CD8-positive, alpha-beta T cell (primary cell): ENCODE measurements at regions of chr2 and their contacts with region 1.

Region 1: GRCh38 chr2:33475224-33476130 is 972 bp upstream of the RASGRP3 start:
- DNase-seq: peak; percentile 68 to 93 (median 82)
- ATAC-seq: peak; percentile 78
- H3K4me3 ChIP-seq: peak overlapping the region; percentile 70
- H3K4me3 Mint-ChIP-seq: peak overlapping the region; percentile 98
- H3K27ac ChIP-seq: peak overlapping the region; percentile 88 to 91
- H3K27ac Mint-ChIP-seq: peak overlapping the region; percentile 98
- H3K4me1 ChIP-seq: peaks cover 21% of the 10 kb centered on the region
- H3K4me1 Mint-ChIP-seq: peaks cover 25% of the 10 kb centered on the region
- H3K27me3 ChIP-seq: no peaks in the 10 kb centered on the region
- H3K27me3 Mint-ChIP-seq: no peaks in the 10 kb centered on the region
- CTCF ChIP-seq: peak; percentile 75

Region 2: GRCh38 chr2:32277674-32278482 is 1197.6 kb before region 1 on chr2 and contains the start of gene YIPF4:
- CTCF ChIA-PET with region 1: no interaction called
- POLR2A ChIA-PET with region 1: no interaction called
- intact Hi-C with region 1: loop called (anchors 10 kb)
- DNase-seq: peak; percentile 83 to 95 (median 90)
- ATAC-seq: peak; percentile 97
- H3K4me3 ChIP-seq: peak within 1 kb of the TSS; percentile 96 to 97
- H3K4me3 Mint-ChIP-seq: peak within 1 kb of the TSS; percentile 85
- H3K27ac ChIP-seq: peak within 1 kb of the TSS; percentile 58 to 93
- H3K27ac Mint-ChIP-seq: peak within 1 kb of the TSS; percentile 95
- H3K4me1 ChIP-seq: peaks cover 34% of the 10 kb centered on the region
- H3K4me1 Mint-ChIP-seq: peaks cover 36% of the 10 kb centered on the region
- H3K27me3 ChIP-seq: no peaks in the 10 kb centered on the region
- H3K27me3 Mint-ChIP-seq: no peaks in the 10 kb centered on the region
- CTCF ChIP-seq: no peak
- total RNA-seq, gene YIPF4: 10.4 to 10.9 TPM

Region 3: GRCh38 chr2:32627814-32628579 is 847.5 kb before region 1 on chr2 and contains the start of gene TTC27:
- CTCF ChIA-PET with region 1: no interaction called
- POLR2A ChIA-PET with region 1: no interaction called
- intact Hi-C with region 1: loop called (anchors 5 to 10 kb)
- DNase-seq: peak; percentile 87 to 96 (median 95)
- ATAC-seq: peak; percentile 99
- H3K4me3 ChIP-seq: peak within 1 kb of the TSS; percentile 82 to 89
- H3K4me3 Mint-ChIP-seq: peak within 1 kb of the TSS; percentile 93
- H3K27ac ChIP-seq: peak within 1 kb of the TSS; percentile 73
- H3K27ac Mint-ChIP-seq: peak within 1 kb of the TSS; percentile 90
- H3K4me1 ChIP-seq: no peaks in the 10 kb centered on the region
- H3K4me1 Mint-ChIP-seq: peaks cover 35% of the 10 kb centered on the region
- H3K27me3 ChIP-seq: no peaks in the 10 kb centered on the region
- H3K27me3 Mint-ChIP-seq: no peaks in the 10 kb centered on the region
- CTCF ChIP-seq: no peak
- total RNA-seq, gene TTC27: 9.6 to 12.1 TPM

Region 4: GRCh38 chr2:33583194-33583938 is 107.9 kb after region 1 on chr2:
- CTCF ChIA-PET with region 1: interaction called, 10 read pairs
- POLR2A ChIA-PET with region 1: no interaction called
- intact Hi-C with region 1: loop called (anchors 1 to 5 kb)
- DNase-seq: peak in 6 of 9 experiments; percentile 16 to 65 (median 22)
- ATAC-seq: no peak
- H3K4me3 ChIP-seq: no peak overlapping the region
- H3K4me3 Mint-ChIP-seq: no peak overlapping the region
- H3K27ac ChIP-seq: no peak overlapping the region
- H3K27ac Mint-ChIP-seq: no peak overlapping the region
- H3K4me1 ChIP-seq: no peaks in the 10 kb centered on the region
- H3K4me1 Mint-ChIP-seq: peaks cover 4% of the 10 kb centered on the region
- H3K27me3 ChIP-seq: no peaks in the 10 kb centered on the region
- H3K27me3 Mint-ChIP-seq: no peaks in the 10 kb centered on the region
- CTCF ChIP-seq: peak; percentile 96

Region 5: DNA sequence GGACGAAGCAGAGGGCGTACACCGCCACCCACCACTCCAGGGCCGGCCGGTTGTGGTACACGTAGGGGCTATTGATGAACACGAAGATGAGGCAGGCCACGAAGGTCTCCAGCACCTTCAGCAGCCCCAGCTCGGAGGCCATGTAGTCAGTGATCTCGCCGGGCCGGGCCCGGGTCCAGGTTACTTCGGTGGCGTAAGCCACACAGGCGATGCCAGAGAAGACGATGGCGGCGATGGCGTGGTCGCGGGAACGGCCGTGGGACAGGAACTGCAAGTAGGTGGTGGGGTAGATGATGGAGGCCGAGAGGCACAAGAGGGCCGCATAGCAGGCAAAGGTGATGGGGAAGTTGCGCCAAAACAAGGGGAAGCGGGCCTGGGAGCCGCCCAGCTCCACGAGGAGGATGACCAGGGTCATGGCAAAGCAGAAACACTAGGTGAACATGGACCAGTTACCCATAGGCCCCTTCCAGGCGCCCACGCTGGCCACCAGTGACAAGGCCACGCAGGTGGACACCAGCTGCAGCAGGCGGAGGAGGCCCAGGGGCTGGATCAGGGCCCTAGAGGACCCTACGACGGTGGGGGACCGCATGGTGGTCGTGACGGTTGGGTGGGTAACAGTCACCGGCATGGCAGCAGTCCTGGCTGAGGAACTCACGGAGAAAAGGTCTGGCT is 252.0 kb after region 1 on chr2:
- CTCF ChIA-PET with region 1: no interaction called
- POLR2A ChIA-PET with region 1: no interaction called
- intact Hi-C with region 1: no loop called
- DNase-seq: no peak
- ATAC-seq: no peak
- H3K4me3 ChIP-seq: no peak overlapping the region
- H3K4me3 Mint-ChIP-seq: no peak overlapping the region
- H3K27ac ChIP-seq: no peak overlapping the region
- H3K27ac Mint-ChIP-seq: no peak overlapping the region
- H3K4me1 ChIP-seq: no peaks in the 10 kb centered on the region
- H3K4me1 Mint-ChIP-seq: no peaks in the 10 kb centered on the region
- H3K27me3 ChIP-seq: no peaks in the 10 kb centered on the region
- H3K27me3 Mint-ChIP-seq: peaks cover 3% of the 10 kb centered on the region
- CTCF ChIP-seq: no peak

Region 6: DNA sequence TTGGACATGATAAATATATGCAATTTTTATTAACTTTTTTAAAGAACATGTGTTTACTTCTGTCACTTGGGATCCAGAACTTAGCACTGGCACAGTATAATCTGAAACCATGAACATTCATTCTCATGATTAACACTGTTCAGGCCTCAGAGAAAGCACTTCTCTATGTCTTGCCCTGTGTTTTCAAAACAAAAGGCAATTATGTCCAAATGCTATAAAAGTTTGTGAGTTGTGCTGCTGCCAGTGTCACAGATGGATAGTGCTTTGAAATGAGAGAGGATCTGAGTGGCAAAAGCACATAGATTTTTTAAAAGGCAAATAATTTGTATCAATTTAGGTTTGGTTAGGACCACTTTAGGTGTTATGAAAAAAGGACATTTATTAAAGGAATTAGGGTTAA is 594.1 kb after region 1 on chr2:
- CTCF ChIA-PET with region 1: no interaction called
- POLR2A ChIA-PET with region 1: no interaction called
- intact Hi-C with region 1: no loop called
- DNase-seq: no peak
- ATAC-seq: no peak
- H3K4me3 ChIP-seq: no peak overlapping the region
- H3K4me3 Mint-ChIP-seq: no peak overlapping the region
- H3K27ac ChIP-seq: no peak overlapping the region
- H3K27ac Mint-ChIP-seq: no peak overlapping the region
- H3K4me1 ChIP-seq: no peaks in the 10 kb centered on the region
- H3K4me1 Mint-ChIP-seq: no peaks in the 10 kb centered on the region
- H3K27me3 ChIP-seq: no peaks in the 10 kb centered on the region
- H3K27me3 Mint-ChIP-seq: no peaks in the 10 kb centered on the region
- CTCF ChIP-seq: no peak

Region 7: GRCh38 chr2:34093790-34094189 is 618.3 kb after region 1 on chr2:
- CTCF ChIA-PET with region 1: no interaction called
- POLR2A ChIA-PET with region 1: no interaction called
- intact Hi-C with region 1: loop called in 1 of 2 experiments (anchors 5 kb)
- DNase-seq: no peak
- ATAC-seq: no peak
- H3K4me3 ChIP-seq: no peak overlapping the region
- H3K4me3 Mint-ChIP-seq: no peak overlapping the region
- H3K27ac ChIP-seq: no peak overlapping the region
- H3K27ac Mint-ChIP-seq: no peak overlapping the region
- H3K4me1 ChIP-seq: no peaks in the 10 kb centered on the region
- H3K4me1 Mint-ChIP-seq: no peaks in the 10 kb centered on the region
- H3K27me3 ChIP-seq: no peaks in the 10 kb centered on the region
- H3K27me3 Mint-ChIP-seq: no peaks in the 10 kb centered on the region
- CTCF ChIP-seq: no peak